A673 (cell line): ENCODE measurements at regions of chr5 and their contacts with region 1.

Region 1: DNA sequence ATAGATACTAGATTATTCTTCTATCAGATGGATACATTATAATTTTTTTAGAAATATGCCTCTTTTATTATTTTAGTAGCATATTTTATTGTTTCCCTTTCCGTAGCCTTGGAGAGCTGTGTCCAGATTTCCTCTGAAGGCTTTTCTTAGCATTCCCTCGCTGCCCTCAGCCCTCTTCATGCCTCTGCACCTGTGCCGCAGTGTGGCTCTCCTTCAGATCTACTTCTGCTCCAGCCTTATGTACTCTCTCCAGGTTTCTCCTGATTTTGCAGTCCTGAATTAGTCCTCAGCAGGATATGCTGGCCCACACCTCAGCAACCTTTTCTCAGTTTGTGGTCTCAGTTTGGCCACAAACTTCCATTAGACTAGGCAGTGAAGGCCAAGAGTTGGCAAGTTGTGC is 1052.0 kb downstream of the TAF11L14 start:
- DNase-seq: no peak
- H3K4me3 ChIP-seq: no peak overlapping the region
- H3K27ac ChIP-seq: no peak overlapping the region
- H3K4me1 ChIP-seq: no peaks in the 10 kb centered on the region
- H3K27me3 ChIP-seq: no peaks in the 10 kb centered on the region
- CTCF ChIP-seq: no peak

Region 2: GRCh38 chr5:18602402-18602801 is 83.9 kb before region 1 on chr5:
- CTCF ChIA-PET with region 1: no interaction called
- POLR2A ChIA-PET with region 1: no interaction called
- intact Hi-C with region 1: loop called (anchors 5 kb)
- DNase-seq: no peak
- H3K4me3 ChIP-seq: no peak overlapping the region
- H3K27ac ChIP-seq: no peak overlapping the region
- H3K4me1 ChIP-seq: no peaks in the 10 kb centered on the region
- H3K27me3 ChIP-seq: no peaks in the 10 kb centered on the region
- CTCF ChIP-seq: no peak